ENCODE measurements at regions of chr3 and their contacts with region 1.

Region 1: DNA sequence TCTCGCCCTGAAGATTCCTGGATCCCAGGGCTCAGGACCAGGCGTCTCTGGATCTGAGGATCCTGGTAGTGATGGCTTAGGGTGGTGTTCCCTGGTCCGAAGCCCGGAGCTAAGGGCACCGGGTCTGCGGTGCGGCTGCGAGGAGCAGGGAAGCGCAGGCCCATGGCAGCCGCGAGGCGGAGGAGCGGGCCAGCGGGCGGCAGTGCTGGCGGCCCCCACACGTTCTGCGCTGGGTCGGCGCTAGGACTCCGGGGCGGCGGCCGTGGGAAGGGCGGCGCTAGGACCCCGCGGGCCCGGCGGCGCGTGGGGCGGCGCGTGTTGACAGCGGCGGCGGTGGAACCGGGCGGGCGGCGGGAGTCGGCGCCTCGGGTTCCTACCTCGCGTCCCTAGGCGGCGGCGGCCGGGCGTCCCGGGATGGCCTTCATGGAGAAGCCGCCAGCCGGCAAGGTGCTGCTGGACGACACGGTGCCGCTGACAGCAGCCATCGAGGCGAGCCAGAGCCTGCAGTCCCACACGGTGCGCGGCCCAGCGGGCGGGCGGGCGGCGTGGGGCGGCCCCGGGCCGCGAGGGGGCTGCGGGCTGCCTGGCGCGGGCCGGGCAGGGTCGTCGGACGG is at the start of gene PXK:
- DNase-seq: peak; percentile 72 to 98 (median 80)
- ATAC-seq: peak; percentile 96
- H3K4me3 ChIP-seq: peak within 1 kb of the TSS; percentile 69 to 86
- H3K27ac ChIP-seq: peak within 1 kb of the TSS; percentile 39 to 92
- H3K4me1 ChIP-seq: peaks cover 3 to 42% of the 10 kb centered on the region in 2 donors
- H3K27me3 ChIP-seq: no peaks in the 10 kb centered on the region
- CTCF ChIP-seq: no peak
- polyA plus RNA-seq, gene PXK: 27.9 to 42.3 (median 36.0) TPM

Region 2: DNA sequence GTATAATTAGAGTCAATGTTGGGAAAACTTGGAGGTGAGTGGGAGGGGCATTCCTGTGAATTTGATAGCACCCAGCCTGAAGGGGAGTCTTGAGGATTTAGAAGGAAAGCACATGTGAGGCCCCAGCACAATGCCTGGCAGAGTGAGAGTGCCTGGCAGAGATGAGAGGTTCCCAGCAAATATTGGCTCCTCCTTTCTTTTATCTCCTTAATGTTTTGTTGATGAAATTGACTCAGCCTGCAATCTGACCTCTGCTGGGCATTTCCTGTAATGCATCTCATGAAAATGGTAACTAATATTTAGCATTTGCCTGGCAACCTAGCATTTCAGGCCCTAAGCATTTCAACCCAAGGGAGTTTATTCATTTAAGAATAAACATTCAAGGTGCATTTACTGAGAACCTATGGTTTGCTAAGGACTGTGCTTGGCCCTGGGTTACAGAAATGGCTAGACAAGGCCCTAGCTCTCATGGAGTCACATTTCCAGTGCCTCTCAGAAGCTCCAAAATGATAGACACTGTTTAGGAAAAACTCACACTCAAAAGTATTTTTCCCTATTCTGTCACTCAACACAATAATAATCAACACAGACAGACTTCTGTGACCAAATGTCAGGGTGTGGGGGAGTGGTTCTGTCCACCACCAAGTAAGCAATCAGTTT is 82.0 kb after region 1 on chr3:
- intact Hi-C with region 1: loop called in 1 of 2 experiments (anchors 5 kb)
- DNase-seq: peak in 2 of 4 donors; percentile 52 to 70
- ATAC-seq: peak; percentile 78
- H3K4me3 ChIP-seq: no peak overlapping the region
- H3K27ac ChIP-seq: no peak overlapping the region
- H3K4me1 ChIP-seq: no peaks in the 10 kb centered on the region
- H3K27me3 ChIP-seq: no peaks in the 10 kb centered on the region
- CTCF ChIP-seq: peak; percentile 71 to 75

Region 3: DNA sequence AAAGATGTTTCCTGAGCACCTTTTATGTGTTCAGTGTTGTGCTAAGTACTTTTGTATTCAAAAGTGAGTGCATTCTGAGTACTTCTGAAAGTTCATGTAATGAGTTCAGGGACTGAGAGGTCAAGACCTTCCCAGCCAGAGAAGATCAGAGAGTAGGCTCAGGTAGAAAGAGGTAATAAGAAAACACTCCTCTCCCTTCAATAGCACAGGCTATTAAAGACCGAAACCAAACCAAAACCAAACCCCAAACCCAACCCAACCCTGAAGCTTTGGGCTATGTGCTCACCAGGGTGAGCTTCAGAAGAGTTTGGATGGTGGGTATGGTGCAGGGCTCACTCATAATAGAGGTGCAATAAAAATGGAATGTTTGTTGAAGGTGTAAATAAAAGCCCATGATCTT is 410.6 kb after region 1 on chr3:
- intact Hi-C with region 1: no loop called
- DNase-seq: no peak
- ATAC-seq: no peak
- H3K4me3 ChIP-seq: no peak overlapping the region
- H3K27ac ChIP-seq: no peak overlapping the region
- H3K4me1 ChIP-seq: no peaks in the 10 kb centered on the region
- H3K27me3 ChIP-seq: no peaks in the 10 kb centered on the region
- CTCF ChIP-seq: no peak